GM12878 (cell line): ENCODE measurements at regions of chr3 and their contacts with region 1.

Region 1: GRCh38 chr3:57397175-57398026 is 104.9 kb upstream of the ASB14 start:
- DNase-seq: peak; percentile 39
- ATAC-seq: peak; percentile 100
- H3K4me3 ChIP-seq: no peak overlapping the region
- H3K27ac ChIP-seq: no peak overlapping the region
- H3K4me1 ChIP-seq: no peaks in the 10 kb centered on the region
- H3K27me3 ChIP-seq: no peaks in the 10 kb centered on the region
- CTCF ChIP-seq: peak; percentile 87 to 97 (median 97)
- EP300 ChIP-seq: no peak
- POLR2A ChIP-seq: no peak
- RAD21 ChIP-seq: peak; percentile 94

Region 2: DNA sequence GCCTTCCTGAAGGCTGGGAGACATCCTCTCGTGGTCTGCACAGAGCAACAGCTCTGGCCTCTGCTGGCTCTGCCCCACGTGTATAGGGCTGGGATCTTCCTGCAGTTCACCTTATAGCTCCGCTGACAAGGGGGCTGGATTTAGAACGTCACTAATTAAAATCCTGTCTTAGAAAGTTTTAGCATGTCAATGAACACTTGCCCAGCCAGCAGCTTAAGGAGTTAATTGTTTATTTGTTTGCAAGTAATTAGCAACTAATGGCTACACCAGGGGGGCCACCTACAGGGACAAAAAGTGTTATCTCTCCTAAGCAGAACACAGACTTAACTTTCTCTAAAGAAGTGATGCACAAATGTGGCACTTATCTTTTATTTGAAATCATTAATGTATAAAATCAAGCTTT is 197.5 kb before region 1 on chr3 and contains the start of gene HESX1:
- CTCF ChIA-PET with region 1: no interaction called
- POLR2A ChIA-PET with region 1: no interaction called
- RAD21 ChIA-PET with region 1: no interaction called
- SMC1A ChIA-PET with region 1: no interaction called
- in situ Hi-C with region 1: no loop called
- intact Hi-C with region 1: no loop called
- DNase-seq: no peak
- ATAC-seq: peak; percentile 25; the same call in 1 of the 3 replicates
- H3K4me3 ChIP-seq: no peak within 1 kb of the TSS
- H3K27ac ChIP-seq: no peak within 1 kb of the TSS
- H3K4me1 ChIP-seq: no peaks in the 10 kb centered on the region
- H3K27me3 ChIP-seq: no peaks in the 10 kb centered on the region
- CTCF ChIP-seq: no peak
- EP300 ChIP-seq: no peak
- POLR2A ChIP-seq: no peak
- RAD21 ChIP-seq: no peak
- polyA plus RNA-seq, gene HESX1: 4.2 to 5.9 TPM

Region 3: DNA sequence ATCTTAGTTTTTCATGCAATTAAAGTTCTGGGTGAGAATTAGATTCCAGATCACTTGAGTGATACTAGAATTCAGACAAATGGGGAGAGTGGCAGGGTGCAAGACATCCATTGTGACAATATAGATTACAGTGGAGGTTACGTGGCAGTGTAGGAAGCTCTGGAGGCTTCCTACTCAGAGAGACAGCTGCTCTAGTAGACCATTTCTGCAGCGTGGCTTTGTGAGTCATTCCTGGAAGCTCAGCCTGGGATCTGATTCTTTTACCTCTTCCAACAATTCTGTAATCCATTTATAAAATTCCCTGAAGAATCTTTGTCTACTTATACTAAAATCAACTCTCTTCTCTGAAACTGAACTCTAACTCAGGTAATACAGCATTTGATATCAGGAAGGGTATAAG is 14.5 kb before region 1 on chr3:
- CTCF ChIA-PET with region 1: interaction called, 23 read pairs
- POLR2A ChIA-PET with region 1: interaction called, 3 read pairs
- RAD21 ChIA-PET with region 1: interaction called, 5 read pairs
- SMC1A ChIA-PET with region 1: interaction called, 8 read pairs
- in situ Hi-C with region 1: no loop called
- intact Hi-C with region 1: no loop called
- DNase-seq: no peak
- ATAC-seq: no peak
- H3K4me3 ChIP-seq: no peak overlapping the region
- H3K27ac ChIP-seq: no peak overlapping the region
- H3K4me1 ChIP-seq: no peaks in the 10 kb centered on the region
- H3K27me3 ChIP-seq: no peaks in the 10 kb centered on the region
- CTCF ChIP-seq: no peak
- EP300 ChIP-seq: no peak
- POLR2A ChIP-seq: no peak
- RAD21 ChIP-seq: no peak

Region 4: DNA sequence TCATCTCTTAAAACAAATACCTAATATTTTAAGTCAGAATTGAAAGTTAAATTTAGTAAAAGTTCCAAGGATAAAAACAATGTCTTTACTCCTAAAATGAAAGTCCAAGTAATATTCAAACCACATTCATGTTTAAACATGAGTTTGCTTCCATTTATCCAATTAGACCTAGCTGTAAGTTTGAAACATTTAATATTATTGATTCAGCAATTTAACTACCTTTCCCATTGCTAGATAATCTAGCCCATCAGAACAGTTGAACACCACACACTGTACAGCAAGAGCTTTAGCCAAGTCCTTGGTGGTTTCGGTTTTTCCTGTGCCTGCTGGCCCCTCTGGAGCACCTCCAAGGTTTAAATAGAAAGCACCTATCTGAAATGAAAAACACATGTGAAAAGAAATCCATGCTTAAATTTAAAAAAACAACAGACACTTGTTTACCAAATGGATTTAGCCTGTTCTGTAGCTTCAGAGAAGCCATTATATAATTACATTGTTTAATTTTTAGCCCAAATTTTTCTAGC is 49.0 kb after region 1 on chr3:
- CTCF ChIA-PET with region 1: interaction called, 16 read pairs
- POLR2A ChIA-PET with region 1: no interaction called
- RAD21 ChIA-PET with region 1: no interaction called
- SMC1A ChIA-PET with region 1: interaction called, 3 read pairs
- in situ Hi-C with region 1: no loop called
- intact Hi-C with region 1: no loop called
- DNase-seq: no peak
- ATAC-seq: no peak
- H3K4me3 ChIP-seq: no peak overlapping the region
- H3K27ac ChIP-seq: no peak overlapping the region
- H3K4me1 ChIP-seq: no peaks in the 10 kb centered on the region
- H3K27me3 ChIP-seq: no peaks in the 10 kb centered on the region
- CTCF ChIP-seq: no peak
- EP300 ChIP-seq: no peak
- POLR2A ChIP-seq: no peak
- RAD21 ChIP-seq: no peak

Region 5: DNA sequence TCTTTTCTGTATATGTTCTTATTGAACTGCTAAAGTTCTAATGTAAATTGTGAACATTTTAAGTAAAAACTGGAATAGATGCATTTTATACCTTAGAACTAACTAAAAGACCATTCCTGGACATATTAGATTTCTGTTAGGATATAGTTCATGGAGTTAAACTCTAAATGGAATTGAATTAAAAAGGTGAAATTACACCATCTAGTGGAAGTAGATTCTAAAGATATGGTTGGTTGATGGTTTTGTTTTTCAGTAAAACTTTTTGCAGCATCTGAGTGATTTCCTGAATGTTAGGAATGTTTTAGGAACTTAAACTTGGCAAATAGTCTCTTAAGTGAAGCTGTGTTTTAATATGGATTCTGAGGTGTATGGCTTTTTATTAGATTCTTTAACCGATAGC is 455.5 kb after region 1 on chr3:
- CTCF ChIA-PET with region 1: interaction called, 49 read pairs
- POLR2A ChIA-PET with region 1: no interaction called
- RAD21 ChIA-PET with region 1: interaction called, 24 read pairs
- SMC1A ChIA-PET with region 1: interaction called, 44 read pairs
- in situ Hi-C with region 1: no loop called
- intact Hi-C with region 1: loop called (anchors 2 kb)
- DNase-seq: no peak
- ATAC-seq: no peak
- H3K4me3 ChIP-seq: no peak overlapping the region
- H3K27ac ChIP-seq: no peak overlapping the region
- H3K4me1 ChIP-seq: no peaks in the 10 kb centered on the region
- H3K27me3 ChIP-seq: no peaks in the 10 kb centered on the region
- CTCF ChIP-seq: peak in 1 of 3 experiments; percentile 34; a peak in 1 of 6 replicates
- EP300 ChIP-seq: no peak
- POLR2A ChIP-seq: no peak
- RAD21 ChIP-seq: peak; percentile 27; the same call in 1 of the 2 replicates

Region 6: GRCh38 chr3:58101499-58102389 is 704.3 kb after region 1 on chr3:
- CTCF ChIA-PET with region 1: no interaction called
- POLR2A ChIA-PET with region 1: no interaction called
- RAD21 ChIA-PET with region 1: no interaction called
- SMC1A ChIA-PET with region 1: no interaction called
- in situ Hi-C with region 1: no loop called
- intact Hi-C with region 1: no loop called
- DNase-seq: no peak
- ATAC-seq: no peak
- H3K4me3 ChIP-seq: no peak overlapping the region
- H3K27ac ChIP-seq: no peak overlapping the region
- H3K4me1 ChIP-seq: no peaks in the 10 kb centered on the region
- H3K27me3 ChIP-seq: no peaks in the 10 kb centered on the region
- CTCF ChIP-seq: no peak
- EP300 ChIP-seq: no peak
- POLR2A ChIP-seq: no peak
- RAD21 ChIP-seq: no peak